ENCODE measurements at regions of chr18 and their contacts with region 1.

Region 1: DNA sequence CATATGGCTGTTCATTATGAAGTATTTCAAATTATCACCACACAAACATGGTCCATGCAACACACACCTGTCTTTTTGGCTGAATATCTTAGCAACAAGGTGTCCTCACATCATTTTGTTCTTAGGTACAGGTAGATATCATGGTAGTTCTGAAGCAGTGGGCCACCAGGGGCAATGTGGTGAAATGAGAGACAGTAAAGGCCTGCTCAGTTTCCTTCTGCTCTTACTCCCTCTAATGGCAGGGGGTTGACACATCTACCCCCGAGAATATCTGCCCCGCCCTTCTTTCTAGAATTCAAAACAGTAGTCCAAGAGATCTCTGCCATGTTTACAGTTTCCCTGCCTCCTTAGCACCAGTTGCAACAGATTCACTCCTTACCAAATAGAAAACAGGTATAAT is 147.0 kb upstream of the KLHL14 start:
- DNase-seq: no peak
- ATAC-seq: peak; percentile 96
- H3K4me3 Mint-ChIP-seq: peak overlapping the region; percentile 42
- H3K27ac Mint-ChIP-seq: peak overlapping the region; percentile 72
- H3K4me1 Mint-ChIP-seq: peaks cover 47% of the 10 kb centered on the region
- H3K27me3 Mint-ChIP-seq: no peaks in the 10 kb centered on the region
- CTCF ChIP-seq: peak; percentile 72

Region 2: DNA sequence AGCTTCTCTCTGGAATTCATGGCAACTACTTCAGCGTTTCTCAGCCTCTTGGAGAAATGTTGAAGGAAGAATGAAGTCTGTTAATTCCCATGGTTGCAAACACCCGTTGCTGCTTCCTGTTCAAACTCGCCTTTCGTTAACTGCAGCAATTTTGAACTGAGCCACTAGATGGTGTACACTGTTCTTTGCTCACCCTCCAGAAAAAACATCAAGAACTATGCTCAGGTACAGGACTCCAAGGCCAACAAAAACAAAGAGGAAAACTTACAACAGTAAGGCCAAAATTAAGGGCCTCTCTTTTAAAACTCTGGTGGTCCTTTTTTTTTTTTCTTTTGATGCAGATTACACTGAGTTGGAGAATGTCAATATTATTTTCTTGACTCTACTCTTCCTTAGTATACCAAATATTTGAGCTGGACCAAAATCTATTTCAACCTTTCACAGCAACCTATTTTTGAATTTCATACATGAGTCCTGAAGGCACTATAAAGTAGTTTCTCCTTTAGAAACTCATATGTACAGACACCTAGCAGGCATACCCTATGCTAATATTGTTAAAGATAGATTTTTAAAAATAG is 205.1 kb before region 1 on chr18:
- CTCF ChIA-PET with region 1: interaction called, 57 read pairs
- POLR2A ChIA-PET with region 1: interaction called, 6 read pairs
- intact Hi-C with region 1: loop called (anchors 1 kb)
- DNase-seq: no peak
- ATAC-seq: peak; percentile 98
- H3K4me3 Mint-ChIP-seq: no peak overlapping the region
- H3K27ac Mint-ChIP-seq: no peak overlapping the region
- H3K4me1 Mint-ChIP-seq: peaks cover 22% of the 10 kb centered on the region
- H3K27me3 Mint-ChIP-seq: no peaks in the 10 kb centered on the region
- CTCF ChIP-seq: peak; percentile 44

Region 3: GRCh38 chr18:32771169-32771751 is 148.5 kb before region 1 on chr18:
- CTCF ChIA-PET with region 1: interaction called, 5 read pairs
- POLR2A ChIA-PET with region 1: interaction called, 23 read pairs
- intact Hi-C with region 1: loop called (anchors 1 kb)
- DNase-seq: peak; percentile 46
- ATAC-seq: peak; percentile 22
- H3K4me3 Mint-ChIP-seq: peak overlapping the region; percentile 96
- H3K27ac Mint-ChIP-seq: peak overlapping the region; percentile 86
- H3K4me1 Mint-ChIP-seq: peaks cover 60% of the 10 kb centered on the region
- H3K27me3 Mint-ChIP-seq: no peaks in the 10 kb centered on the region
- CTCF ChIP-seq: no peak

Region 4: DNA sequence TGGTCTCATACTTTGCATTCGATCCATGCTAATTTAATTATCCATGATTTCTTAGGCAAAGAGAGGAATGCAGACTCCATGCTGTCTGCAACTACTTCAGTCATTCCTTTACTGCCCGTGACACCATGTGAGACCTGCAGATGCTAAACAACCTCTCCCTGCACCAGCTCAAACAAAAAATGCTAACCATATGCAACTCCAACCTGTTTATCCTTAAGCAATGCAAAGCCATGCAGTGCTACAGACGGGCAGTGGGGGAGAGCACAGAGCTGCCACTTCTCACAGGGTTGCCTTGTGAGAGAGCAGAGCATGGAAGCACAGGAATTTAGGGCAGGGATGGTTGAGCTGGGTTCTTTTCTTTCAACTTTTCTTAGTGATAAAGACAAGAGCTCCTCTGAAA is 72.1 kb before region 1 on chr18:
- CTCF ChIA-PET with region 1: interaction called, 3 read pairs
- POLR2A ChIA-PET with region 1: no interaction called
- intact Hi-C with region 1: loop called (anchors 5 kb)
- DNase-seq: no peak
- ATAC-seq: no peak
- H3K4me3 Mint-ChIP-seq: no peak overlapping the region
- H3K27ac Mint-ChIP-seq: no peak overlapping the region
- H3K4me1 Mint-ChIP-seq: no peaks in the 10 kb centered on the region
- H3K27me3 Mint-ChIP-seq: no peaks in the 10 kb centered on the region
- CTCF ChIP-seq: no peak

Region 5: DNA sequence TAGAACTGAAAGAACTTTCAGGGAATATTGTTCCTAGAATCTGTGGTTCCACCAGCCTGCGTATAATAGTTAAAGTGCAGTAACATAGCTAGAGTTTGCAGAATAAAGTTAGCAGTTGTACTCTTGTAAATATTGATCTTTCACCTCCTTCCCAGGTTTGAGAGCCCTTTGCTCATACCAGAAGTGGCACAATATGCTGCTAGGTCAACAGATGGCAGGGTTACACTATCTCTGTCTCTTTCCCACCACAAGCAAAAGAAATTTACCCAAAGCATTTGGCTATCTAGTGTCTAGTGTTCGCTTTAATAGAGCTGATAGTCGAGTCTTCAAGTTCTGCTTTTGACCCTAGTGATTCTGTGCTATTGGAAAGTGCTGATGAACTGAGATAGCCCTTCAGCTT is 28.0 kb before region 1 on chr18:
- CTCF ChIA-PET with region 1: interaction called, 18 read pairs
- POLR2A ChIA-PET with region 1: no interaction called
- intact Hi-C with region 1: no loop called
- DNase-seq: no peak
- ATAC-seq: peak; percentile 40
- H3K4me3 Mint-ChIP-seq: no peak overlapping the region
- H3K27ac Mint-ChIP-seq: no peak overlapping the region
- H3K4me1 Mint-ChIP-seq: peaks cover 37% of the 10 kb centered on the region
- H3K27me3 Mint-ChIP-seq: no peaks in the 10 kb centered on the region
- CTCF ChIP-seq: no peak

Region 6: DNA sequence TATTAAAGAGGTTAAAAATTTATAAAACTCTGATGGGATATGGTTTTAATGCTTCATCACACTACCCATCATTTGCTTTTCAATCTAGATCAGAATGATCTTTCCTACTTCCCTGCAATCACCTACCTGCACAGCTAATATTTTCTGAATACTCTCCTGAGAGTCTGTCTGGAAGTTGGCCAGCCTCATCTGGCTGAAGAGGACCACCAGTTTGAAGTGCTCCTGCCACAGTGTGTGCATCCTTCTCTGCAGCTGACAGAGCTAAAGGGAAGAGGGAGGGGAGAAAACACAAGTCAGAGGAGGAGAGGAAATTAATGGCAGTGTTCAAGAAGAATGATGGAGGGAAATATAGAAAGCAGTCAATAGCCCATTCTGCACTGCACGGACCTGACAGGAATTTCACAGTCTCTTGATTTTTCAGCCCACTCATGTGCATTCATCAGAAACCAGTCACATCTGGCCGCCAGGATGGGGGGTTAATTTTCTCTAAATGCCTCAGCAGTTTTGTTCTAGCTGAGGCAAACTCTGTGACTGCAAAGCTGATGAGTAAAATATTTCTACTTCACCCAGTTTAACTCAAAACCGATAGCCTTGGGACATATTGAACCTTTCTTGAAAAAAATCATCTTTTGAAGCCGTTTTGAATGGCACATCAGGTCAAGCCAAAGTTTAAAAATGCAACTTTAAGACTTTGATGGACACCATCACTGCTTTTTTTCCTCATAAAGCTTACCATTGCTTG is 54.8 kb after region 1 on chr18:
- CTCF ChIA-PET with region 1: no interaction called
- POLR2A ChIA-PET with region 1: no interaction called
- intact Hi-C with region 1: loop called (anchors 5 kb)
- DNase-seq: no peak
- ATAC-seq: peak; percentile 50
- H3K4me3 Mint-ChIP-seq: no peak overlapping the region
- H3K27ac Mint-ChIP-seq: no peak overlapping the region
- H3K4me1 Mint-ChIP-seq: peaks cover 7% of the 10 kb centered on the region
- H3K27me3 Mint-ChIP-seq: peaks cover 7% of the 10 kb centered on the region
- CTCF ChIP-seq: no peak

Measured in activated B cell treated with CpG ODN at 0.5 μM for 24 hours (primary cell).